Activated T-helper 1 cell treated with anti-CD3 and anti-CD28 coated beads, Interleukin-12 subunit alpha, Interleukin-12 subunit beta, Interleukin-2, Interleukin-4 antibody, amounts not matched to agents 30 ng/mL and 10 ng/mL and 1 ng/mL, durations not matched to agents 14 hours and 24 hours and 36 hours (primary cell): ENCODE measurements at regions of chr15 and their contacts with region 1.

Region 1: GRCh38 chr15:60673918-60674558 is 195.1 kb upstream of the ICE2 start:
- DNase-seq: no peak
- H3K4me3 Mint-ChIP-seq: no peak overlapping the region
- H3K27ac Mint-ChIP-seq: peak overlapping the region; percentile 16
- H3K4me1 Mint-ChIP-seq: peaks cover 22% of the 10 kb centered on the region
- H3K27me3 Mint-ChIP-seq: peaks cover 2% of the 10 kb centered on the region

Region 2: DNA sequence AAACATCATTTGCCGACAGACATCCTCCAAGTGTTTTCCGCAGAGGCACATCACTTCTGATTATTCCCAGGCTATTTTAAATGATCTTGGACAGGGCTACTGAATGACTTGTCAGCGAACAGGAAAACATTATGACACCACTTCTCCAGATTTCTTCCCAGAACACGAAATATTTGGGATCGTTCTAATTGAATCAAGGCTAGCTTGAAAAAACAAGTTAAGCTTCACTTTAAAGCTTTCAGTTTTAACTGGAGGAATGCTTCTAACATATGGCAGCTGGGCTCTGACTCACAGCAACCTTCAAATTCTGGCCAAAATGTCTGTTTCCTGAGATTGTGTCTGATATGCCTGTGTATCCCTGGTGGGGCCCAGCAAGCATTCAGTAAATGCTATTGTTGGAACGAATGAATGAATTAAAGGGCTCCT is 68.1 kb before region 1 on chr15:
- intact Hi-C with region 1: no loop called
- DNase-seq: no peak
- H3K4me3 Mint-ChIP-seq: no peak overlapping the region
- H3K27ac Mint-ChIP-seq: no peak overlapping the region
- H3K4me1 Mint-ChIP-seq: peaks cover 30% of the 10 kb centered on the region
- H3K27me3 Mint-ChIP-seq: peaks cover 27% of the 10 kb centered on the region

Region 3: DNA sequence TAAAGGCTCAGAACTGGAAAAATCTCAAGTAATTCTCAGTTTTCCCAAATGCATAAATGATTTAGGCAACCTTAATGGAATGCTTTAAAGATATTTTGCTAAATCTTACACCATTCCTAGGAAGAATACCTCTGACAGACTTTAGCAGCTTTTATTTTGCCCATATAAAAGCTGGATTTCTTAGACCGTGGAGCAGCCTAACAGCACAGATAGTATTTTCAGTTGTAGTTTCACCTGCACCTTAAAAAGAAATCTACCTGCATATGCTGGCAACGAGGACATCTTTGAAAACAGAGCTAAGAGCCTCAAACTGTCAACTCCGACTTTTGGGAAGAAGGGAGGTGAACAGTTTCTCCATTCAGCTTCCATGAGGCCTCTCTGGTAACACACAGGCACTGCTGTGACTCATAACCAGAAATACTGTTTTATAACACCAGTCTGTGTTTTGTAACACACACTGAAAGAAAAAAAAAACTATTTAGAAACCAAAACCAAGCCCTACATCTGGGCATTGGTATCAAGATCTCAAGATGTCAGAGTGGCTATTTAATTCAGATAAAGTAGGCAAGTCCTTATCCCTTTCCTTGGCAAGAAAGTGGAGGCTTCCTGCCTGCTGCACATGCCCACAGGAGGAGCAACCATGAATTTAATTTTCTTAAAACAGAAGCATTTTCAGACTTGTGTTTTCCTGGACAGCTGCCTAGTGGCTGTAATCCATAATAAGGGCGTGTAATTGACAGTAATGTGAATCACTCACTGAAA is 13.6 kb before region 1 on chr15:
- intact Hi-C with region 1: loop called (anchors 1 kb)
- DNase-seq: no peak
- H3K4me3 Mint-ChIP-seq: no peak overlapping the region
- H3K27ac Mint-ChIP-seq: no peak overlapping the region
- H3K4me1 Mint-ChIP-seq: peaks cover 55% of the 10 kb centered on the region
- H3K27me3 Mint-ChIP-seq: peaks cover 3% of the 10 kb centered on the region